ENCODE measurements at regions of chr5 and their contacts with region 1.

Region 1: DNA sequence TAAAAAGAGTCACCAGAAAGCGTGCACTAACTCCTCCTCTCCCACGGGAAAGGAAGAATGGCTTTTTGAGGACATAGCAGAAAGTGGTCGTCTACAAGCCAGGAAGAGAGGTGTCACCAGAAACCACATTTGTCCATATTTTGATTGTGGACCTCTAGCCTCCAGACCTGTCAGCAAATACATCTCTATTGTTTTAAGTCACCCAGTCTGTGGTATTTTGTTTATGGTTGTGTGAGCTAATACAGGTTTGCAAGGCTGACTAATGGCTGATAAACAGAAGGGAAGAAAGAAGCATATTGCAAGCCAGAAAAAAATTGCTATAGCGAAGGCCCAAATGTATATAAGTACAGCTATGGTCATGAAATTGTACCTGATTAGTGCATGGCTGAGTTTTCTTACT is 21.4 kb downstream of the WDR70 start:
- DNase-seq: no peak
- ATAC-seq: no peak
- H3K4me3 Mint-ChIP-seq: no peak overlapping the region
- H3K27ac Mint-ChIP-seq: no peak overlapping the region
- H3K4me1 Mint-ChIP-seq: no peaks in the 10 kb centered on the region
- H3K27me3 Mint-ChIP-seq: no peaks in the 10 kb centered on the region

Region 2: GRCh38 chr5:38932854-38933408 is 1532.4 kb after region 1 on chr5:
- CTCF ChIA-PET with region 1: no interaction called
- POLR2A ChIA-PET with region 1: interaction called, 10 read pairs
- intact Hi-C with region 1: no loop called
- DNase-seq: no peak
- ATAC-seq: no peak
- H3K4me3 Mint-ChIP-seq: no peak overlapping the region
- H3K27ac Mint-ChIP-seq: no peak overlapping the region
- H3K4me1 Mint-ChIP-seq: no peaks in the 10 kb centered on the region
- H3K27me3 Mint-ChIP-seq: peaks cover 2% of the 10 kb centered on the region